CD4-positive, alpha-beta T cell (primary cell): ENCODE measurements at regions of chr9 and their contacts with region 1.

Region 1: DNA sequence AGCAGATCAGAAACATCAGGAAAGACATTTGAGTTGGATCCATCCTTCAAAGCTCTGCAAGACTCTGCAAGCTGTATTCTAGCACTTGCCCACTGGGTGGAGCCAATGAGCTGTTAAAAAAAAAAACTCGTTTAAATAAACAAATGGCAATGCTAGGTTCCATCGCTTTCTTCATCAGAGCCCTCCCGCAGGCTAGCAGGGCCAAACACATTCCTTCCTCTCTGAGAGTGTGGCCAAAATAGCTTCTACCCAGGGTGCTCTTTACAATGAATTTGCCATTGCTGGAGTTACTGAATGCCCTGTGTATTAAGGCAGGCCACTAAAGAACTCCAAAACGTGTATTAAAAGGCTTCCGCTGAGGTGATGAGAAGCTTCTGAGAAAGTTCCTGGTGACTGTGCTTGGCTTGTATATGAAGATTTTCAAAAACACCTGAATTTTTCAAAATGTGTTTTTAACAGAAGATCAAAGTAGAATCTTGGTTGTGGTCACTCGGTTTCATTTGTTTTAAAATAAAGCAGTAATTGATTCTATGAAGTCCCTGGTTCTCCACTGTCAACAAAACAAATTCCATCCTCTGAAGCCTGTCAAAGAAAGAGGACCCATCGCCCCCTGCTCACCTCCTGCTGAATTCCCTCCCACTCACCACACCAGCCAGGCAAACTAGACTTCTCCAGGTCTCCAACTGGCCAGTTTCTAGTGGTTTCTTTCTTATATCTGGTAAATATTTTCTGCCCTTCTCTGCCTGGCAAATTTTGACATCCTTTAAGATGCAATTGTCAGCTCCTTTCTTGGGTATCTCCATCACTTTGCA is 36.5 kb upstream of the EQTN start:
- DNase-seq: peak in 12 of 14 experiments; percentile 5 to 73 (median 28)
- ATAC-seq: peak; percentile 57
- H3K4me3 ChIP-seq: no peak overlapping the region
- H3K4me3 Mint-ChIP-seq: no peak overlapping the region
- H3K27ac ChIP-seq: no peak overlapping the region
- H3K27ac Mint-ChIP-seq: no peak overlapping the region
- H3K4me1 ChIP-seq: peaks cover 2% of the 10 kb centered on the region
- H3K4me1 Mint-ChIP-seq: no peaks in the 10 kb centered on the region
- H3K27me3 ChIP-seq: no peaks in the 10 kb centered on the region
- H3K27me3 Mint-ChIP-seq: no peaks in the 10 kb centered on the region
- CTCF ChIP-seq: peak; percentile 92

Region 2: DNA sequence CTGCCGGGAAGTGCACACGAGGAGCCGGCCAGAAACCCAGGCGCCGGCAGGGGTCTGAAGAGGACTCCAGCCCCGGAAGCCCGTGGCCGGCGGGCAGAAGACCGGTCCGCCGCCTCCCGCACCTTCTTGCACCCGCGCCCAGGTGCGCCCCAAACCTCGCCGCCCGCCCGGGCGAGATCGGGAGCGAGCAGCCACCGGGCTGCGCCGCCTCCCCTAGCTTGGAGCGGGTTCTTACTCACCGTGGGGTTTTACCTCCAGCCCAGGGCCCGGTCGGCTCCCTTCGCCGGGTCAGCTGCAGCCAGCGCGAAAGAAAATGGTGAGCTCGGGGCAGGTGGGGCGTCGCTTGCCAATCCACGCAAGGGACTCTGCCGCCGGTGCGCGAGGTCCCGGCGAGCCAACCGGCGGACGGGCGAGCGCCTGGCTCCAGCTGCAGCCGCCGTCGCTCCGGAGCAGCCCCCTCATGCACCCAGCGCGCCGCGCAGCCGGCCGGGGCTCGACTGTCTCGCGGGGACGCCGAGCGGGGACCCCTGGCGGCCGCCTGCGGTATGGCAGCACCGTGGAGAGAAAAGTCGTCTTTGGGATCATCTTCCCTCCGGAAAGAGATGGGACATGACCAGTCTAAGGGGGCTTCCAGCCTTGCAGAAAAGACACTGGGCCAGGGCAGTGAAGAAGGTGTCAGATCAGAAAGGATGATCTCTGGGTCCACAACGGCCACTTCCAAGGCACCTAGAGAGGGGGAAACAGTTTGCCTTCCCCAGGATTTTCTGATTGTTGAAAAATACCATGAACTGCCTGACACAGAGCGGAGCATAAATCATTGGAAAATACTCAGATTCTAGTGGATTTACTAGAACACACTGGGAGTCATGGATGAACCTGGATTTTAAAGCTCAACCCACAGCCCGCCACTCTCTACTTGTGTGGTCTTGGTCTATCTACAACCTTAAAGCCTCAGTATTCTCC is 196.2 kb after region 1 on chr9 and contains the start of gene MOB3B:
- CTCF ChIA-PET with region 1: interaction called, 5 read pairs
- POLR2A ChIA-PET with region 1: interaction called, 4 read pairs
- intact Hi-C with region 1: loop called (anchors 1 to 2 kb)
- DNase-seq: peak; percentile 56 to 84 (median 68)
- ATAC-seq: peak; percentile 85
- H3K4me3 ChIP-seq: peak within 1 kb of the TSS; percentile 64
- H3K4me3 Mint-ChIP-seq: peak within 1 kb of the TSS; percentile 95
- H3K27ac ChIP-seq: no peak within 1 kb of the TSS
- H3K27ac Mint-ChIP-seq: no peak within 1 kb of the TSS
- H3K4me1 ChIP-seq: peaks cover 16% of the 10 kb centered on the region
- H3K4me1 Mint-ChIP-seq: peaks cover 15% of the 10 kb centered on the region
- H3K27me3 ChIP-seq: peaks cover 0 to 7% of the 10 kb centered on the region in 2 experiments
- H3K27me3 Mint-ChIP-seq: peaks cover 3% of the 10 kb centered on the region
- CTCF ChIP-seq: peak; percentile 90
- total RNA-seq, gene MOB3B: 0.25 to 0.30 TPM

Region 3: GRCh38 chr9:27548055-27548741 is 214.8 kb after region 1 on chr9:
- CTCF ChIA-PET with region 1: no interaction called
- POLR2A ChIA-PET with region 1: no interaction called
- intact Hi-C with region 1: loop called (anchors 5 kb)
- DNase-seq: peak in 1 of 14 experiments; percentile 11
- ATAC-seq: no peak
- H3K4me3 ChIP-seq: no peak overlapping the region
- H3K4me3 Mint-ChIP-seq: no peak overlapping the region
- H3K27ac ChIP-seq: no peak overlapping the region
- H3K27ac Mint-ChIP-seq: no peak overlapping the region
- H3K4me1 ChIP-seq: no peaks in the 10 kb centered on the region
- H3K4me1 Mint-ChIP-seq: no peaks in the 10 kb centered on the region
- H3K27me3 ChIP-seq: no peaks in the 10 kb centered on the region
- H3K27me3 Mint-ChIP-seq: no peaks in the 10 kb centered on the region
- CTCF ChIP-seq: peak; percentile 47

Region 4: GRCh38 chr9:27600256-27600655 is 266.8 kb after region 1 on chr9:
- CTCF ChIA-PET with region 1: no interaction called
- POLR2A ChIA-PET with region 1: no interaction called
- intact Hi-C with region 1: loop called in 1 of 2 experiments (anchors 5 kb)
- DNase-seq: no peak
- ATAC-seq: no peak
- H3K4me3 ChIP-seq: no peak overlapping the region
- H3K4me3 Mint-ChIP-seq: no peak overlapping the region
- H3K27ac ChIP-seq: no peak overlapping the region
- H3K27ac Mint-ChIP-seq: no peak overlapping the region
- H3K4me1 ChIP-seq: no peaks in the 10 kb centered on the region
- H3K4me1 Mint-ChIP-seq: no peaks in the 10 kb centered on the region
- H3K27me3 ChIP-seq: no peaks in the 10 kb centered on the region
- H3K27me3 Mint-ChIP-seq: no peaks in the 10 kb centered on the region
- CTCF ChIP-seq: no peak

Region 5: GRCh38 chr9:27771803-27772545 is 438.5 kb after region 1 on chr9:
- CTCF ChIA-PET with region 1: no interaction called
- POLR2A ChIA-PET with region 1: no interaction called
- intact Hi-C with region 1: no loop called
- DNase-seq: no peak
- ATAC-seq: no peak
- H3K4me3 ChIP-seq: no peak overlapping the region
- H3K4me3 Mint-ChIP-seq: no peak overlapping the region
- H3K27ac ChIP-seq: no peak overlapping the region
- H3K27ac Mint-ChIP-seq: no peak overlapping the region
- H3K4me1 ChIP-seq: no peaks in the 10 kb centered on the region
- H3K4me1 Mint-ChIP-seq: no peaks in the 10 kb centered on the region
- H3K27me3 ChIP-seq: no peaks in the 10 kb centered on the region
- H3K27me3 Mint-ChIP-seq: no peaks in the 10 kb centered on the region
- CTCF ChIP-seq: no peak